Dorsolateral prefrontal cortex (tissue), 120 donors: ENCODE measurements at regions of chr1 and their contacts with region 1.

Region 1: DNA sequence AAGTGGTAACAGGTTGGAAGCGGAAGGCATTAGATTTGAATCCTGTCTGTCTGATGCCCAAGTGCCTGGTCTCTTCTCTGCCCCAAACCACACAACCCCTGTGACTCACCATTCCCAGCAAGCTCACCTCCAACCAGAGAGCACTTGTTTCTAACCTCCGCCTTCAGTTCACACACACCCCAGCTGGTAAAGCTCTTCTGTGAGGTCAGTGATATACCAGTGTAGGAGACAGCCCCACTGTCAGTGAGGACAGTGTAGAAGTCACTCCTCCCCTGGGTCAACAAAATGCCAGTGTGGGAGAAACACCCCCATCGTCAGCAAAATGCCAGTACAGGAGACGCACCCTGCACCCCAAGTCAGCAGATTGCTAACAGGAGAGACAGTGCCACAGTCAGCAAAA is 2.6 kb downstream of the RIMS3 start:
- DNase-seq: no peak
- H3K4me3 ChIP-seq: peak overlapping the region in 29 of 59 donors; percentile 2 to 87 (median 74)
- H3K27ac ChIP-seq: peak overlapping the region in 48 of 59 donors; percentile 2 to 86 (median 56)
- H3K27me3 ChIP-seq: no peaks in the 10 kb centered on the region
- CTCF ChIP-seq: no peak

Region 2: DNA sequence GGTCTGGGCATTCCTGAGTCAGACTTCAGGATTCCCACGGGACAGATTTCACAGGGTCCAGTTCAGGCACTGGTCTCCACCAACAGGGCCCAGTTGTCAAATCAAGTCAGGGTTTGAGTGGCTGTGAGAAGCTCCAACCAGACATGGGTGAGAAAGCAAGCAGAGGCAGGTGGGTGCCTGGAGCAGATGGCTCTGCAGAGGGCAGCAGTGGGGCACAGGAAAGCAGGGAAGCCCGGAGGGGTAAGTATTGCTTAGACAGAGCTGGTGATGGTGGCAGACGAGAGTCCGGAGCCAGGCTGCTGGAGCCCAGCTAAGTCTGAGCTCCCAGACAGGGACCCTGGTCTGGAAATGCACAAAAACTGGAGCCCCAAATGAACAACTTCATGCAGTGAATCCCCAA is 37.8 kb before region 1 on chr1:
- intact Hi-C with region 1: loop called in 1 of 2 experiments (anchors 5 kb)
- DNase-seq: peak in 6 of 10 donors; percentile 36 to 63 (median 55)
- H3K4me3 ChIP-seq: no peak overlapping the region
- H3K27ac ChIP-seq: peak overlapping the region in 37 of 59 donors; percentile 0 to 85 (median 51)
- H3K27me3 ChIP-seq: no peaks in the 10 kb centered on the region
- CTCF ChIP-seq: peak in 36 of 56 donors; percentile 9 to 43 (median 29)